ENCODE measurements at regions of chr10 and their contacts with region 1.

Region 1: GRCh38 chr10:22308390-22308789 is 7.8 kb upstream of the COMMD3 start:
- DNase-seq: peak; percentile 70
- H3K4me3 Mint-ChIP-seq: no peak overlapping the region
- H3K27ac Mint-ChIP-seq: no peak overlapping the region
- H3K4me1 Mint-ChIP-seq: peaks cover 2% of the 10 kb centered on the region
- H3K27me3 Mint-ChIP-seq: peaks cover 2% of the 10 kb centered on the region

Region 2: GRCh38 chr10:21634599-21635365 is 673.6 kb before region 1 on chr10:
- CTCF ChIA-PET with region 1: no interaction called
- intact Hi-C with region 1: no loop called
- DNase-seq: no peak
- H3K4me3 Mint-ChIP-seq: no peak overlapping the region
- H3K27ac Mint-ChIP-seq: no peak overlapping the region
- H3K4me1 Mint-ChIP-seq: peaks cover 18% of the 10 kb centered on the region
- H3K27me3 Mint-ChIP-seq: no peaks in the 10 kb centered on the region

Region 3: GRCh38 chr10:22183771-22184461 is 124.5 kb before region 1 on chr10:
- CTCF ChIA-PET with region 1: no interaction called
- intact Hi-C with region 1: no loop called
- DNase-seq: no peak
- H3K4me3 Mint-ChIP-seq: no peak overlapping the region
- H3K27ac Mint-ChIP-seq: no peak overlapping the region
- H3K4me1 Mint-ChIP-seq: no peaks in the 10 kb centered on the region
- H3K27me3 Mint-ChIP-seq: peaks cover 13% of the 10 kb centered on the region

Region 4: GRCh38 chr10:22222236-22223190 is 85.9 kb before region 1 on chr10:
- CTCF ChIA-PET with region 1: no interaction called
- intact Hi-C with region 1: loop called (anchors 1 kb)
- DNase-seq: peak; percentile 58
- H3K4me3 Mint-ChIP-seq: no peak overlapping the region
- H3K27ac Mint-ChIP-seq: peak overlapping the region; percentile 32
- H3K4me1 Mint-ChIP-seq: peaks cover 18% of the 10 kb centered on the region
- H3K27me3 Mint-ChIP-seq: no peaks in the 10 kb centered on the region

Region 5: DNA sequence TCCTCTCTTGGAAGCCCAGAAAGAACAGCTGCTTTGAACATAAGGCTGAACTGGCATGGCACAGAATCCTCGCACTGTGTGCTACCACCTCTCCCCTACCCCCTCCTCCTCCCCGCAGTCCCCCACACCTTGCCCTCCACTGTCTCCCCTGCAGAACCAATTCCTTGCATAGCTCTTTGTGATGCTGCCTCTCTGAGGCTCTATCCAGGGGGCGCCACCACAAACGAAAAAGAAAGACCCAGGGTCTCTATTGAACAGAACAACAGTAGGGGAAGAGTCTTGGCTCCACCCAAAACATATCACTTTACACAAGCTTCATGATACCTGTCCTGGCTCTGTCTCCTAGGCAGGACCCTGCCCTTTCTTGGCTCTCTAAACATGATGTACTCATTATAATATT is 64.4 kb before region 1 on chr10:
- CTCF ChIA-PET with region 1: no interaction called
- intact Hi-C with region 1: loop called (anchors 1 kb)
- DNase-seq: no peak
- H3K4me3 Mint-ChIP-seq: no peak overlapping the region
- H3K27ac Mint-ChIP-seq: no peak overlapping the region
- H3K4me1 Mint-ChIP-seq: peaks cover 40% of the 10 kb centered on the region
- H3K27me3 Mint-ChIP-seq: no peaks in the 10 kb centered on the region

Region 6: DNA sequence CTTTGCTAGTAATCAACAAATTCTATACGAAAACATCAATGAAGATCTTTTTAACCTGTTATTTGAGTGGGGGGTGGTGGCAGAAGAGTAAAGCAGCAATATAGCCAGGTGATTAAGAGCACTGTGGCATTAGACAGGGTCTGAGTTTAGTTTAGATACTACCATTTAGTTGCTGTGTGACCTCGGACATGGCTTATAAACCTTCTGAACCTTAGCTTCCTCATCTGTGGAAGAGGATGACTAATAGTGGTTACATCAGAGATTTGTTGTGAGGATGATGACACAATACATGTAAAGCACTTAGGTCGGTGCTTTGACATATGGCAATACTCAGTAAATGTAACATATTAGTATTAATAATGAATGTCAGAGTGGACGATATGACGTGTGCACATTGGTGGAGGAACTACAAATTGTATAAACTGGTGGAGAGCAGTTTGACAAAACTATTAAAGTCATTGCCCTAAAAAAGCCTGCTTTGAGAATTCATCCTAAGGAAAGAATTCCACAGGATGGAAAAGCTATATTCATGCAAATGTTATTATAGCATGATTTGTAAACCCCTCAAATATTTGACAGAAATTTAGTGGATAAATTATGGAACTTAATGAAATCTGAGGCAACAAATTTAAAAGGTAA is 61.2 kb after region 1 on chr10:
- CTCF ChIA-PET with region 1: no interaction called
- intact Hi-C with region 1: loop called (anchors 2 kb)
- DNase-seq: no peak
- H3K4me3 Mint-ChIP-seq: no peak overlapping the region
- H3K27ac Mint-ChIP-seq: no peak overlapping the region
- H3K4me1 Mint-ChIP-seq: peaks cover 27% of the 10 kb centered on the region
- H3K27me3 Mint-ChIP-seq: peaks cover 2% of the 10 kb centered on the region

Measured in activated naive CD4-positive, alpha-beta T cell treated with anti-CD3 and anti-CD28 coated beads for 36 hours (primary cell).